ENCODE measurements at regions of chr10 and their contacts with region 1.

Region 1: DNA sequence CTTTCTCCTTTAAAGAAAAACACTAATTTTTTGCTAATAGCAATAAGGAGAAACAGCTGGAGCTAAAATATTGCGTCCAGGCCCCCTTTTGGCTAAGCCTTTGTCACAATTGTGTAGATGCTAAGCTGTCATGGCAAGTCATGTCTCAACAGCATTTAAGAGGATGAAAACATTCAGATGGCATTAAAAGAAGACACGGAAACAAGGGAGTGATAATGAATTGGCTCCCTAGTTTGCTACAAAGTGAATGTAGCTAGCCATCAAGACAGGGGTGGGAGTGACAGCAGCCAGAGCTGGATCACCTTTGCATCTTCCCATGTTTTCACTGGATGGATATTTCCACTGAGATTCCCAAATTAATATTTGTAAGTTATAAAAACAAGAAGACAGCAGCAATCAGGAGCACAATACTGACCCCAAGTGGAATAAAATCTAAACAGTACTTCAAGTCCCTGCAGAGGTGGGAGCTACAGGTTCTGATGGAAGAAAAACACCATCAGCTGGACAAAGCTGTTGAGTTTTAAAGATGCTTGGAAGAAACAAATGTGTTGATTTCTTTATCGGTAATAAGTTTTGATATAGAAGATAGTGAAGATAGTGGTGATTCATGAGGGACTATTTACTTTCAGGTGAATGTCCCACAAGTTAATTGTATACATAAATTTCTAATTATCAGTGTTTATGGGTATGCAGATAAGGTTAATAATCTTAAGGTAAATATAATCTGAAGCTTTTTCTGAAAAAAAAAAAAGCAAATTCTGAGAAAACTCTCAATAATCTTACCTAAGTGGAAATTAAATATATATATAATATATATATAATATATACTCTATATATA is 129.4 kb downstream of the SLC16A9 start:
- DNase-seq: peak; percentile 42
- H3K4me3 ChIP-seq: no peak overlapping the region
- H3K27ac ChIP-seq: no peak overlapping the region
- H3K4me1 ChIP-seq: peaks cover 0 to 33% (median 20%) of the 10 kb centered on the region in 4 donors
- H3K27me3 ChIP-seq: no peaks in the 10 kb centered on the region
- CTCF ChIP-seq: peak; percentile 61 to 66 (median 61)
- EP300 ChIP-seq: no peak
- POLR2A ChIP-seq: no peak

Region 2: GRCh38 chr10:59240582-59241183 is 339.6 kb before region 1 on chr10:
- intact Hi-C with region 1: loop called (anchors 2 kb)
- DNase-seq: no peak
- H3K4me3 ChIP-seq: no peak overlapping the region
- H3K27ac ChIP-seq: peak overlapping the region in 1 of 4 donors; percentile 20
- H3K4me1 ChIP-seq: peaks cover 5 to 29% (median 18%) of the 10 kb centered on the region in 4 donors
- H3K27me3 ChIP-seq: no peaks in the 10 kb centered on the region
- CTCF ChIP-seq: peak; percentile 66 to 67 (median 66)
- EP300 ChIP-seq: no peak
- POLR2A ChIP-seq: no peak

Region 3: DNA sequence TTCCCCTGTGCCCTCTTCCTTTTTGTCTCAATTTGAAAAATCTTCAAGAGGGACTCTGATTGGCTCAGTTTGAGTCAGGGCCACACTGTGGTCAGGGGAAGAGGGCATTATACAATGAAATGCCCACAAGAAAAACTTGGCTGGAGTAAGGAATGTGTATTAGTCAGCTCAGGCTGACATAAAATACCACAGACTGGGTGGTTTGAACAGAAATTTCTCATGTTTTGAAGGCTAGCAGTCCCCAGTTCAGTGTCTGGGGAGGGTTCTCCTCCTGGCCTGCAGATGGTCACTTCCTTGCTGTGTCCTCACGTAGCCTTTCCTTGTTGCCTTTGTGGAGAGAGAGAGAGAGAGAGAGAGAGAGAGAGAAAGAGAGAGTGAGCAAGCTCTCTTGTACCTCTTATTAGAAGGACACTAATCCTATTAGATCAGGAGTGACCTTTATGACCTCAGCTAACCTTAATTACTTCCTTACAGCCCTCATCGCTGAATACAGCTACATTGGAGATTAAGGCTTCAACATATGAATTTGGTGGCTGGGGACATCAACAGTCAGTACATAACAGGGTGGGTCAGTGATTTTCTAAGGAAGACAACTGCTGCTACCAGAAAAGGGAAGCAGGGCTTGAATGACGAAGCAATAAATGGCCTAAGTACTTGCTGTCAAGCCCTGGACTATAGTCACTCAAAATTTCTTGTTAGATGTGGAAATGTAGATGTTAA is 192.1 kb before region 1 on chr10:
- intact Hi-C with region 1: loop called (anchors 10 kb)
- DNase-seq: no peak
- H3K4me3 ChIP-seq: no peak overlapping the region
- H3K27ac ChIP-seq: peak overlapping the region in 3 of 4 donors; percentile 2 to 47 (median 29)
- H3K4me1 ChIP-seq: peaks cover 0 to 25% (median 16%) of the 10 kb centered on the region in 4 donors
- H3K27me3 ChIP-seq: no peaks in the 10 kb centered on the region
- CTCF ChIP-seq: no peak
- EP300 ChIP-seq: no peak
- POLR2A ChIP-seq: no peak

Measured in esophagus muscularis mucosa (tissue), 4 donors.